Endothelial cell of umbilical vein (primary cell): ENCODE measurements at regions of chr11 and their contacts with region 1.

Region 1: DNA sequence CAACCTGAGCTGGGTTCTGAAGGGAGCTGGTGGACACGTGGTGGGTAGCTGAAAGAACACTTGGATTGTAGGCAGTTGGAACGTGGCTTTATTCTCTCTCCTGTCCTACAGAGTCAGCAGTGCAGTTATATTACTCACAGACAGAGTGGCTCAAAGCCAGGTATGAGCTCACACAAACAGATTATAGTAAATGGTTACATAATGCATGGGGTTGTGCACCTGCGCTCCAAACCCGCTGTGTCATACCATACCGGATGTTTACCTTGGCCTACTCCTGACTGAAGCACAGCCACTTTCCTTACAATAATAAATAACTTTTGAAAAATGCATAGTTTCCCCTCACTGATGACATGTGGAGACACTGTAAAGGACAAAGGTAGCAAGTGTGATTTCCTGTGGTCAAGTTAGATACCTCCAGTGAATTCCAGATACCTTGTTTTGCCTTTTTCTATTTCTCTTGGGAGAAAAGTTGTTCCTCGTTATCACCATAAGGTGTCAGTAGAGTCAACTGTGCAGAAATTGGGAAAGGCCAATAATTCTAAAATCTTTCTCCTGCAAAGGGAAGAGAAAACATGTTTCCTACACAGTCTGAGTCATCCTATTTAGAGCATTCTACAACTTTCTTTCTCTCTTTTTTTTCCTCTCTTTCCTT is 13.5 kb downstream of the MS4A6A start:
- DNase-seq: peak; percentile 100
- H3K4me3 ChIP-seq: no peak overlapping the region
- H3K27ac ChIP-seq: peak overlapping the region; percentile 86
- H3K4me1 ChIP-seq: peaks cover 46% of the 10 kb centered on the region
- H3K27me3 ChIP-seq: no peaks in the 10 kb centered on the region
- CTCF ChIP-seq: peak; percentile 62 to 63
- POLR2A ChIP-seq: peak; percentile 93

Region 2: GRCh38 chr11:59753650-59754493 is 415.5 kb before region 1 on chr11:
- CTCF ChIA-PET with region 1: interaction called, 3 read pairs
- POLR2A ChIA-PET with region 1: no interaction called
- dilution Hi-C with region 1: no loop called
- intact Hi-C with region 1: loop called (anchors 1 kb)
- DNase-seq: peak; percentile 82
- H3K4me3 ChIP-seq: peak overlapping the region; percentile 65 to 87 (median 83)
- H3K27ac ChIP-seq: peak overlapping the region; percentile 72
- H3K4me1 ChIP-seq: peaks cover 21% of the 10 kb centered on the region
- H3K27me3 ChIP-seq: no peaks in the 10 kb centered on the region
- CTCF ChIP-seq: peak; percentile 82 to 89
- POLR2A ChIP-seq: no peak

Region 3: GRCh38 chr11:60098508-60098907 is 70.9 kb before region 1 on chr11:
- CTCF ChIA-PET with region 1: interaction called, 3 read pairs
- POLR2A ChIA-PET with region 1: no interaction called
- dilution Hi-C with region 1: no loop called
- intact Hi-C with region 1: loop called (anchors 1 kb)
- DNase-seq: peak; percentile 94
- H3K4me3 ChIP-seq: no peak overlapping the region
- H3K27ac ChIP-seq: peak overlapping the region; percentile 76
- H3K4me1 ChIP-seq: peaks cover 37% of the 10 kb centered on the region
- H3K27me3 ChIP-seq: no peaks in the 10 kb centered on the region
- CTCF ChIP-seq: no peak
- POLR2A ChIP-seq: no peak

Region 4: DNA sequence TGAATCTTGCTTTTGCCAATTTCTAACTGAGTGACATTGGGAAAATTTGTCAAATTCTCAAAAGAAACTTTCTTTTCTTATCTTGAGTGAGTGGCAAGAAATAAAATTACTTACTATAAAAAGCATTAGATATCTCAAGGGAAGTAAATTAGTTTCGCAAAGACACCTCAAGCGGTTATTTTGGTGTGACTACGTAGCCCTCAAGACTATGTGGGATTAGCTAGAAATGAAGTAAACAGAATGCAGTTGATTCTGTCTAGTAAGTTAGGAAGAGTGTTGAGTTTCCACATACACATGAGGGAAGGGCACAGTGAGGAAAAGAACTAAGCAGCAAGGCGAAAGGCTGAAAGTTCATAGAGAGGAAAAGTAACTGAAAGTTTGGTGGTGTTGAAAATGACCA is 41.8 kb after region 1 on chr11:
- CTCF ChIA-PET with region 1: interaction called, 3 read pairs
- POLR2A ChIA-PET with region 1: no interaction called
- dilution Hi-C with region 1: no loop called
- intact Hi-C with region 1: loop called (anchors 1 kb)
- DNase-seq: no peak
- H3K4me3 ChIP-seq: no peak overlapping the region
- H3K27ac ChIP-seq: no peak overlapping the region
- H3K4me1 ChIP-seq: peaks cover 16% of the 10 kb centered on the region
- H3K27me3 ChIP-seq: no peaks in the 10 kb centered on the region
- CTCF ChIP-seq: no peak
- POLR2A ChIP-seq: no peak

Region 5: DNA sequence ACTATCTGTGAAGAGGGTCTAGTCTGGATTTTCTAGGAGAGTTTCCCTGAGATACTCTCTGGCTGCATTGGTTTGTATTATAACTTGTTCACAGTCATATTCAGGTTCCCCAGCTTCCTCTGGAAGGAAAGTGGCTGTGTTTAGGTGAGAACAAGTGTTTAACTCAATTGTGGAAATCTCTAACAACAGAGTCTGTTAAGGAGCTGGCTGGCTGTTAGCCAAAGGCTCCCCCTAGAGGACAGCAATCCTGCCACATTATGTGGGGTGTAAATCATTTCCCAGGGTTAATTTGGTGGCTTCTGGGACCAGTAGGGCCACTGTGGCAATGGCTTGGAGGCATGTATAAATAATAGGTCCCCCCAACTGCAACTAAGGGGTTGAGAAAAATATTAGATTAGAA is 176.1 kb after region 1 on chr11:
- CTCF ChIA-PET with region 1: interaction called, 9 read pairs
- POLR2A ChIA-PET with region 1: no interaction called
- dilution Hi-C with region 1: no loop called
- intact Hi-C with region 1: loop called (anchors 2 kb)
- DNase-seq: peak; percentile 54
- H3K4me3 ChIP-seq: no peak overlapping the region
- H3K27ac ChIP-seq: no peak overlapping the region
- H3K4me1 ChIP-seq: no peaks in the 10 kb centered on the region
- H3K27me3 ChIP-seq: peaks cover 25 to 26% of the 10 kb centered on the region in 2 experiments
- CTCF ChIP-seq: peak; percentile 46 to 50
- POLR2A ChIP-seq: no peak

Region 6: DNA sequence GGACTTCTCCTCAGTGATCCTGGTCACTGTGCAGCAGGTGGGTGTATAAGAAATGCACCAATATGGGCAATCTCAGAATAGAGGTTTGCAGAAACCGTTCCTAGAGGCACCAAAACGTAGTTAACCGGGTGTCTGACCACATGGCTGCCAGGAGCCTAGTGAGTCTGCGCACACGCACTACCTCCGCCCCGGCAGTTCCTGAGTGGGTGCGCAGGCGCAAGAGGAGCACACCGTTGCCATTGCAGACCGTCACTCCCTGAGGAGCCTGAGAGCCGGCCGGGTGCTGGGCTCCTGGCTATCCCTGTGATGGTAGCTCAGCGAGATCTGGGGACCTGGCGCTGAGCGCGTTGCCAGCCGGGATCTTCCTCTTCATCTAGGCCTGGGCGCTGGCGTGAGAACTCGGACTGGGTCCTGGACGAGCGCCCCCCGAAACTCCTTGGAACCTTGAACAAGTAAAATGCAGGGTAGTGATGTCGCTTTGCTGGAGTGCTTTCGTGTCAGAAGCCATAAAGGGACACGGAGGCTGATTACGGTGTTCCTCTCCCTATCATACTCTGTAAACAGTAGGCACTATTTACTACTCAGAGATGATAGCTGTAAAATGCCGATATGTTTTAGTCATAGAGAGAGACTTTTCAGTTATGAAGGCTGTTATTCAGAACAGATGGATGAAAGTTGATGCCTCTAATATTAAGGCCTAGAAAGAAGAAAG is 345.9 kb after region 1 on chr11 and contains the start of gene MS4A13:
- CTCF ChIA-PET with region 1: no interaction called
- POLR2A ChIA-PET with region 1: no interaction called
- dilution Hi-C with region 1: no loop called
- intact Hi-C with region 1: no loop called
- DNase-seq: no peak
- H3K4me3 ChIP-seq: no peak within 1 kb of the TSS
- H3K27ac ChIP-seq: no peak within 1 kb of the TSS
- H3K4me1 ChIP-seq: no peaks in the 10 kb centered on the region
- H3K27me3 ChIP-seq: no peaks in the 10 kb centered on the region
- CTCF ChIP-seq: no peak
- POLR2A ChIP-seq: no peak
- total RNA-seq, gene MS4A13: not detected in 2 replicates

Region 7: DNA sequence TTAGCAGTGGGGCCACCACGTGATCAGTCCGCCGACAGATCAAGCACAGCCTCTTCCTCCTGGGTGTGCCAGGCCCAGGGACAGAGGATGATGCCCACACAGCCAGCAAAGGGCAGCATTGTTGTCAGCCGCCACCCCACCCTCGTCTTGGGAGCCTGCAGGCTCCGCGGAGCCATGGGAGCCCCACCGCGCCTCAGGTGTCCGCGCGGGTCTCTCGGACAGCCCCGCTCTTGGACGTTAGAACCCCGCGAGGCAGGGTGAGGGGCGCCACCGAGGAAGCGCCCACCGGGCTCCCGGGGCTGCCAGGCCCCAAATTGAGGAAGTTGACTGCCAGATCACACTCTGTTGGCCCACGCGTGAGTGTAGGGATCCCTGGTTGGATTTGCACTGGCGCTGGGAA is 446.1 kb after region 1 on chr11:
- CTCF ChIA-PET with region 1: no interaction called
- POLR2A ChIA-PET with region 1: no interaction called
- dilution Hi-C with region 1: no loop called
- intact Hi-C with region 1: loop called (anchors 1 kb)
- DNase-seq: no peak
- H3K4me3 ChIP-seq: no peak overlapping the region
- H3K27ac ChIP-seq: no peak overlapping the region
- H3K4me1 ChIP-seq: no peaks in the 10 kb centered on the region
- H3K27me3 ChIP-seq: peaks cover 2% of the 10 kb centered on the region in 2 experiments
- CTCF ChIP-seq: no peak
- POLR2A ChIP-seq: no peak